ENCODE measurements at regions of chr11 and their contacts with region 1.

Region 1: DNA sequence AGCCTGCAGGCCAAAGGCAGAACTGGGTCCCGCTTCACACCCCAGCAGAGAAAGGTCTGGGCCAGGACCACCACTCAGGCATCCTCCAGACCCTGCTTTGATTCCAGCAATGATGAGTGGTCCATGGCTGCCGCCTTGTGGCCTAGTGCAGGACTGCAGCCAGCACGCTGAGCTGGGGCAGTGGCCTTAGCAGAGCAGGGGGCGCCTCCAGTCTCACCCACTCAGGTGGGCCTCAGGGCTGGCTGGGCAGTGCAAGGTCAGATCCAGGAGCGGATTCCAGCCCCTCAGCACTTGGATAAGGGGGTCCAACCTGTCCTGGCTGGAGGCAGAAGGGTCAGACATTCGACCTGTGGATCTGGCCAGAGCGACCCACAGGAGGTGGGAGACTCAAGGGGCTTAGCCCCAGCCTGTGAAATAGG is 9.6 kb upstream of the PDE2A start:
- DNase-seq: peak; percentile 92
- ATAC-seq: peak; percentile 80
- H3K4me3 Mint-ChIP-seq: no peak overlapping the region
- H3K27ac Mint-ChIP-seq: no peak overlapping the region
- H3K4me1 Mint-ChIP-seq: peaks cover 9% of the 10 kb centered on the region
- H3K27me3 Mint-ChIP-seq: peaks cover 23% of the 10 kb centered on the region
- CTCF ChIP-seq: peak; percentile 96

Region 2: GRCh38 chr11:72454791-72455190 is 229.0 kb before region 1 on chr11:
- CTCF ChIA-PET with region 1: interaction called, 13 read pairs
- POLR2A ChIA-PET with region 1: no interaction called
- DNase-seq: peak; percentile 17
- ATAC-seq: peak; percentile 67; the same call in 1 of the 2 replicates
- H3K4me3 Mint-ChIP-seq: no peak overlapping the region
- H3K27ac Mint-ChIP-seq: no peak overlapping the region
- H3K4me1 Mint-ChIP-seq: 0 out of 2 replicates have a peak, but pooled peaks cover 2% of the 10 kb centered on the region
- H3K27me3 Mint-ChIP-seq: peaks cover 8% of the 10 kb centered on the region
- CTCF ChIP-seq: no peak

Region 3: GRCh38 chr11:72598906-72599305 is 84.9 kb before region 1 on chr11:
- CTCF ChIA-PET with region 1: interaction called, 461 read pairs
- POLR2A ChIA-PET with region 1: interaction called, 4 read pairs
- DNase-seq: peak; percentile 68
- ATAC-seq: peak; percentile 75
- H3K4me3 Mint-ChIP-seq: no peak overlapping the region
- H3K27ac Mint-ChIP-seq: no peak overlapping the region
- H3K4me1 Mint-ChIP-seq: peaks cover 35% of the 10 kb centered on the region
- H3K27me3 Mint-ChIP-seq: peaks cover 13% of the 10 kb centered on the region
- CTCF ChIP-seq: peak; percentile 15; the same call in 1 of the 2 replicates

Region 4: DNA sequence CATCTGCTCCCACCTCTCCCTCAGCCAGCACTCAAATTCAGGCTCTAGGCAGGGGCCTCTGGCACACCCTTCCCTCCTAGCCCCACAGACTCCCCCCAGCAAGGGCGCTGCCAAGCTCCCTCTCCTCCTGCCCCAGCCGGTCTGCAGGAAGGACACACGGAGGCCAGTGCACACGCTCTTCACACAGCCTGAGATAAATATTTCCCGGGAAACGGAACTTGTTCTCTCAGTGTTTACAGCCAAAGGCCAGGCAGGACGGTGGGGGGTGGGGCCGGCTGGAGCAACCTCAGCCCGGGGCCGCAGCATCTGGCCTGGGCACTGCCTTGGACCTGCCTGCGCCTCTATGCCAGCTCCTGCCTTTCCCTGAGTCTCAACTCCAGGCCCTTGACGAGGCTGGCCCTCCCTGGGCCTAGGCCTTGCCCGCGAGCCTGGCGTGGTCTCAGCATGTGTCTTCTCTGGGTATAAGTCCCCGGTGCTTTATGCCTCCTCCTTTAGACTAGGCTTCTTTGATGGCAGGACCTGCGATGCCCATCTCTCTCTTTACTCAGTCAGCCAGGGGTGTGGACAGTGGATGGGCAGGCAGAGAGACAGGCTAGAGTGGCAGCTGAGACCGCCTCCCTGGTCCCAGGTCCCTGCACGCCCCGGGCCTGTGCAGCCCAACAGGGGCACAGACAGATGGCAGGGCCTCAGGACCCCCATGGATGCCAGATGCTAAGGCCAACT is 57.9 kb before region 1 on chr11:
- CTCF ChIA-PET with region 1: interaction called, 11 read pairs
- POLR2A ChIA-PET with region 1: no interaction called
- DNase-seq: no peak
- ATAC-seq: peak; percentile 41
- H3K4me3 Mint-ChIP-seq: no peak overlapping the region
- H3K27ac Mint-ChIP-seq: no peak overlapping the region
- H3K4me1 Mint-ChIP-seq: peaks cover 3% of the 10 kb centered on the region
- H3K27me3 Mint-ChIP-seq: peaks cover 6% of the 10 kb centered on the region; the same call in 1 of the 2 replicates
- CTCF ChIP-seq: no peak

Region 5: DNA sequence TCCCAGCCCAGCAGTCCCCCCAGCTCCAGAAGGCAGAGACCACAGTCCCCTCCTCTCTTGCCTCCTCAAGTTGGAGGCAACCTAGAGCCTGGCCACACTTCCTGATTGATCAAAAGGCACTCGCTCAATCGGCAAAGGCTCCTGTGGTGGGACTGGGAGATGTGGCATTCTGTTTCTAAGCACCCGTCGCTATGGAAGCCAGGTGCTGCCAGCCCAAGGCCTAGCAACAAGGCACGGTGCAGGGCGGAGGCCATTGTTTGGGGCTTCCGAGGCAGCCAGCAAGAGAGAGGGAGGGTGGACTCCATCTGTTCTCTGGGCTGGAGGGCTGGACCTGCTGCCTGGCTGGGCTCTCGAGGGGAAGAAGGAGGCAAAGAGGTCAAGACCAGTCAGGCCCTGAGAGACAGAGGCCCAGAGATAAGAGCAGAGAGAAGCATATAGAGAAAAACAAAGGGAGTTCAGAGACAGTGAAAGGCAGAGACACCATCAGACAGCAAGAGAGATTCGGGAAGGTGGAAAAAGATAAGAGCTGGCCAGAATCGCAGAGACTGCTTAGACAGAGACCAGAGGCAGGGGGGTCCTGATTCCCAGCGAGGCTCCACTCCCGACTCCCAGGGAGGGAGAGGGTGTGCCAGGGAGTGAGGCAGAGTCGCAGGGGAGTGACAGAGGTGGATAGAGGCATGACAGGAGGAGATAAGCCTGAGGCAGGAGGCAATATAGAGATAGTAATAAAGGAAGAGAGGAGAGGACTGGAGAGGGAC is 30.7 kb before region 1 on chr11:
- CTCF ChIA-PET with region 1: interaction called, 55 read pairs
- POLR2A ChIA-PET with region 1: no interaction called
- DNase-seq: peak; percentile 78
- ATAC-seq: peak; percentile 94
- H3K4me3 Mint-ChIP-seq: no peak overlapping the region
- H3K27ac Mint-ChIP-seq: 0 out of 2 replicates have a peak overlapping the region, but pooled peaks have one; percentile 1
- H3K4me1 Mint-ChIP-seq: peaks cover 13% of the 10 kb centered on the region
- H3K27me3 Mint-ChIP-seq: peaks cover 8% of the 10 kb centered on the region
- CTCF ChIP-seq: no peak

Region 6: GRCh38 chr11:72696866-72697700 is 13.3 kb after region 1 on chr11:
- CTCF ChIA-PET with region 1: interaction called, 53 read pairs
- POLR2A ChIA-PET with region 1: no interaction called
- DNase-seq: peak; percentile 81
- ATAC-seq: peak; percentile 92
- H3K4me3 Mint-ChIP-seq: no peak overlapping the region
- H3K27ac Mint-ChIP-seq: no peak overlapping the region
- H3K4me1 Mint-ChIP-seq: no peaks in the 10 kb centered on the region
- H3K27me3 Mint-ChIP-seq: no peaks in the 10 kb centered on the region
- CTCF ChIP-seq: no peak

Region 7: GRCh38 chr11:72787216-72788104 is 103.7 kb after region 1 on chr11:
- CTCF ChIA-PET with region 1: interaction called, 10 read pairs
- POLR2A ChIA-PET with region 1: no interaction called
- DNase-seq: peak; percentile 88
- ATAC-seq: peak; percentile 92
- H3K4me3 Mint-ChIP-seq: peak overlapping the region; percentile 40; the same call in 1 of the 2 replicates
- H3K27ac Mint-ChIP-seq: peak overlapping the region; percentile 84; the same call in 1 of the 2 replicates
- H3K4me1 Mint-ChIP-seq: peaks cover 26% of the 10 kb centered on the region
- H3K27me3 Mint-ChIP-seq: peaks cover under 1% of the 10 kb centered on the region; the same call in 1 of the 2 replicates
- CTCF ChIP-seq: no peak

Region 8: DNA sequence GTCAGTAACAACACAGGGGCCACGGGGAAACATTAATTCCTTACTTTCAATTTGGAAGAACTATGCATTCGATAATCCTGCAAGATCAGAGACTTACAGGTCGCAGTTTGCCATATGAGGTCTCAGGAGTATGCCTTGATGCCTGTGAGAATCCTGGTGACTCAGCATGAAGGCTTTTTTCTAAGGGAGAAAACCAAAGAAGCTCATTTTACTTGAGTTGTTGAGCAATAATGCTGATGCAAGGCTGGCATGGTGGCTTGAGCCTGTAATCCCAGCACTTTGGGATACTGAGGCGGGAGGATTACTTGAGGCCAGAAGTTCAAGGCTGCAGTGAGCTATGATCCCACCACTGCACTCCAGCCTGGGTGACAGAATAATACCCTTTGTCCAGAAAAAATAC is 157.0 kb after region 1 on chr11:
- CTCF ChIA-PET with region 1: no interaction called
- POLR2A ChIA-PET with region 1: no interaction called
- DNase-seq: no peak
- ATAC-seq: no peak
- H3K4me3 Mint-ChIP-seq: no peak overlapping the region
- H3K27ac Mint-ChIP-seq: no peak overlapping the region
- H3K4me1 Mint-ChIP-seq: no peaks in the 10 kb centered on the region
- H3K27me3 Mint-ChIP-seq: no peaks in the 10 kb centered on the region
- CTCF ChIP-seq: no peak

Region 9: DNA sequence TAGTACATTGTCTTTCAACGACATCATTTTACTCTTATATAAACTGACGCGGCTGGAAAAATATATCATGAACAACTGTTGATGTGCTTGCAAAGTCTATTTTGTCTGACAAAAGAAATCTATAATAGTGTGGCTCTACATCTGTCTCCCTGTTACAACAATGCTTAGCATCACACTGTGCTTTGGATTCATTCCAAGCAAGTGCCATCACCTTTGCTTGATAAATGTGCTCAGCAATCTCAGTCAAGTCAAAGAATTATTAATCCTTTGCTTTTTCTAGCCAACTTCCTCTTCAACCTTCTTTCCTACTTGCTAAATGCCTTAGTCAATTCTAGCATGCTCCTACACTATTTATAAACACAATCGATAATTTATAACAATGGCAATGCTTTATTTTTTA is 317.8 kb after region 1 on chr11:
- CTCF ChIA-PET with region 1: no interaction called
- POLR2A ChIA-PET with region 1: no interaction called
- DNase-seq: no peak
- ATAC-seq: no peak
- H3K4me3 Mint-ChIP-seq: no peak overlapping the region
- H3K27ac Mint-ChIP-seq: no peak overlapping the region
- H3K4me1 Mint-ChIP-seq: no peaks in the 10 kb centered on the region
- H3K27me3 Mint-ChIP-seq: no peaks in the 10 kb centered on the region
- CTCF ChIP-seq: no peak

Region 10: GRCh38 chr11:73325036-73325981 is 641.5 kb after region 1 on chr11:
- CTCF ChIA-PET with region 1: no interaction called
- POLR2A ChIA-PET with region 1: no interaction called
- DNase-seq: no peak
- ATAC-seq: no peak
- H3K4me3 Mint-ChIP-seq: no peak overlapping the region
- H3K27ac Mint-ChIP-seq: no peak overlapping the region
- H3K4me1 Mint-ChIP-seq: peaks cover 44% of the 10 kb centered on the region
- H3K27me3 Mint-ChIP-seq: peaks cover 24% of the 10 kb centered on the region
- CTCF ChIP-seq: no peak

Measured in WTC11 (cell line).